ENCODE measurements at regions of chr13 and their contacts with region 1.

Region 1: GRCh38 chr13:74062933-74063332 is 71.3 kb downstream of the KLF12 start:
- DNase-seq: no peak
- H3K4me3 ChIP-seq: peak overlapping the region; percentile 8 to 31
- H3K27ac ChIP-seq: peak overlapping the region; percentile 8
- H3K4me1 ChIP-seq: peaks cover 25% of the 10 kb centered on the region
- H3K27me3 ChIP-seq: no peaks in the 10 kb centered on the region
- CTCF ChIP-seq: no peak
- POLR2A ChIP-seq: no peak

Region 2: GRCh38 chr13:74133657-74134201 is 70.8 kb after region 1 on chr13:
- intact Hi-C with region 1: loop called (anchors 10 kb)
- DNase-seq: peak in 1 of 2 donors; percentile 94
- H3K4me3 ChIP-seq: peak overlapping the region; percentile 87 to 96
- H3K27ac ChIP-seq: peak overlapping the region; percentile 90
- H3K4me1 ChIP-seq: peaks cover 23% of the 10 kb centered on the region
- H3K27me3 ChIP-seq: no peaks in the 10 kb centered on the region
- CTCF ChIP-seq: no peak
- POLR2A ChIP-seq: peak in 1 of 2 donors; percentile 38

Measured in vagina (tissue), 2 donors.